ENCODE measurements at regions of chr17 and their contacts with region 1.

Region 1: DNA sequence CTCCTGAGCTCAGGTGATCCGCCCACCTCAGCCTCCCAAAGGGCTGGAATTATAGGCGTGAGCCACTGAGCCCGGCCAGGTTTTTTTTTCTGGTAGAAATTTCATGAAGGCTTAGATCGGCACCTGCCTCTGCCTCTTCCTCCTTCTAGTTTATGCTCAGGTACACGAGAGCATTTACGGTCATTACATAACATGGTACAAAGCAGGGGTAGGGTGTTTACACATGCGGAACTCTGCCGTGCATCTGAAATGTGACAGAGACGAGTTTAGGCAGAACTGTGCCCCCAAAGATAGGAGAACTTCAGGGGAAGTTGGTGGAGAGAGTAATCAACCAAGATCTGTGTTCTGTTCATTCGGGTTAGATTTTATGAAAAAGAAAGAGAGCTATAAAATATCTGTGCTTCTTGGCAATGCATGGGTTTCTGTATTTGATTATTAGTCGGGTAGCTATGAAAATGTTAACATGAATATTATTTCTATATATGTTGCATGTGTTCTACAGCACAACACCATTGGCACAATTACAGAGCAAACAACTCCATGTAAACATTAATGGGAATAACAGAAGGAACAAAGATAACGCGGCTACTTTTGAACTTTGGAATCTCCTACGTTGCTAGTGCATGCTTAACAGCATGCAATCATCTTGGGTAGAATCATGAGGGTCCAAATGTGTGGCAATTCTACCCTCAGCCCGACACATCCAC is 23.5 kb upstream of the MAP2K6 start:
- DNase-seq: peak; percentile 28
- H3K4me3 ChIP-seq: peak overlapping the region; percentile 4
- H3K27ac ChIP-seq: peak overlapping the region; percentile 55
- H3K4me1 ChIP-seq: no peaks in the 10 kb centered on the region
- H3K27me3 ChIP-seq: no peaks in the 10 kb centered on the region
- CTCF ChIP-seq: no peak

Region 2: DNA sequence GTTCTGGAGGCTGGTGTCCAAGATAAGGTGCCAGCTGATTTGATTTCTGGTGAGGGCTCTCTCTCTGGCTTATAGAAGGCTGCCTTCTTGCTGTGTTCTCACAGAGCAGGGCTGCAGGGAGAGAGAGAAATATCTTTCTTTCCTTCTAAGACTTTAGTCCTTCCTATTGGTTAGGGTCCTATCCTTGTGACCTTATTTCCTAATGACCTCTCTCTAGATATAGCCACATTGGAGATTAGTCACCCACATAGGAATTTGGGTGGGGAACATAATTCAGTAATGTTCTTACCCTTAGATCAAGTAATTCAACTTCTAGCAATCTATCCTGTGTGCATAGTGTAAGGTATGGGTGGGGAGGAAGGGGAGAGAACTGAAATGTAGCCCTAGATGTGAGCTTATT is 46.0 kb before region 1 on chr17:
- intact Hi-C with region 1: loop called (anchors 5 kb)
- DNase-seq: no peak
- H3K4me3 ChIP-seq: no peak overlapping the region
- H3K27ac ChIP-seq: no peak overlapping the region
- H3K4me1 ChIP-seq: no peaks in the 10 kb centered on the region
- H3K27me3 ChIP-seq: no peaks in the 10 kb centered on the region
- CTCF ChIP-seq: no peak